Left colon (tissue), 2 donors: ENCODE measurements at regions of chr20 and their contacts with region 1.

Region 1: GRCh38 chr20:39049684-39050554 is 87.8 kb downstream of the DHX35 start:
- DNase-seq: peak; percentile 60 to 81
- ATAC-seq: peak; percentile 85

Region 2: DNA sequence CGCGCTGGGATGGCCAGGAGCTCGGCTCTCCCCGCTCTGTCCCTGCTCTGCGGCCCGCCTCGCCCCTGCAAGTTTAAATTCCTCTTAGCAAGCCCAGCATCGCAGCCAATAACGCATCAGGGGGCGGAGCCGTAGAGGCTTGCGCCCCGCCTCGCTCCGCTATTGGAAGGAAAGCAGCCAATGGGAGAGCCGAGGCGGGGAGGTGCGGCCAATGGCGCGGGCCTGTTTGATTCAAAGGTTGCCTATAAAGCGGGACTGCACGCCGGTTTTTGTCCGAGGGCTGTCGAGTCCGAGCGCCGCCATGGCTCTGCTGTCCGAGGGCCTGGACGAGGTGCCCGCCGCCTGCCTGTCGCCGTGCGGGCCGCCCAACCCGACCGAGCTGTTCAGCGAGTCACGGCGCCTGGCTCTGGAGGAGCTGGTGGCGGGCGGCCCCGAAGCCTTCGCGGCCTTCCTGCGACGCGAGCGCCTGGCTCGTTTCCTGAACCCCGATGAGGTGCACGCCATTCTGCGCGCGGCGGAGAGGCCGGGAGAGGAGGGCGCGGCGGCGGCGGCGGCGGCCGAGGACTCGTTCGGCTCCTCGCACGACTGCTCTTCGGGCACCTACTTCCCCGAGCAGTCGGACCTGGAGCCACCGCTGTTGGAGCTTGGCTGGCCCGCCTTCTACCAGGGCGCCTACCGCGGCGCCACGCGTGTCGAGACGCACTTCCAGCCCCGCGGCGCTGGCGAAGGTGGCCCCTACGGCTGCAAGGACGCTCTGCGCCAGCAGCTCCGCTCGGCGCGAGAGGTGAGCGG is 123.6 kb before region 1 on chr20 and contains the start of gene FAM83D:
- intact Hi-C with region 1: loop called in 1 of 2 experiments (anchors 5 kb)
- DNase-seq: peak; percentile 97 to 98
- ATAC-seq: peak; percentile 94
- total RNA-seq, gene FAM83D: 9.4 to 11.2 TPM